ENCODE measurements at regions of chr19 and their contacts with region 1.

Region 1: DNA sequence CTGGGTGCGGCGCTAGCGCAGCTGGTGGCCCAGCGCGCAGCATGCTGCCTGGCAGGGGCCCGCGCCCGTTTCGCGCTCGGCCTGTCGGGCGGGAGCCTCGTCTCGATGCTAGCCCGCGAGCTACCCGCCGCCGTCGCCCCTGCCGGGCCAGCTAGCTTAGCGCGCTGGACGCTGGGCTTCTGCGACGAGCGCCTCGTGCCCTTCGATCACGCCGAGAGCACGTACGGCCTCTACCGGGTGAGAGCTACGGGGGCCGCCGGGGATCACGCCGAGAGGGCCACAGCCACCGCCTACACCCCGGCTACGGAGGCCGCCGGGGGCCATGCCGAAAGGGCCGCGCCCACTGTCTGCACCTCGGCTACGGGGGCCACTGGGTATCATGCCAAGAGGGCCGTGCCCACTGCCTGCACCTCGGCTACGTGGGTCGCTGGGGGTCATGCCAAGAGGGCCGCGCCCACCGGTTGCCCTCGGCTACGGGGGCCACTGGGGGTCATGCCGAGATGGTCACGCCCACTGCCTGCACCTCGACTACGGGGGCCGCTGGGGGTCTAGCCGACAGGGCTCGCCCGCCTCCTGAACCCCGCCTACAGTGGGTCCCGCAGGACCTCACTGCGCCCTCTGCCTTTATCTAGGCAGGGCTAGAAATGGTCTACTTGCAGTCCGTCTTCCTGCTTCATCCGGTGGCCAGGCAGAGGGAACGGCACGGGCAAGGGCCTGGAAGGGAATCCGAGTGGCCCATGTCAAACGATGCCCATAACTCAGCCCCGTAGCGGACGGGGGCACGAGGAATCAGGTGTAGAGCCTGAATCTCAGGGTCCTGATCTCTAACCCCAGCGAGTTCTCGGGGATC is 500 bp downstream of the PGLS start:
- DNase-seq: peak; percentile 76
- ATAC-seq: peak; percentile 46
- H3K4me3 ChIP-seq: peak overlapping the region; percentile 87 to 99
- H3K27ac ChIP-seq: peak overlapping the region; percentile 100
- H3K4me1 ChIP-seq: peaks cover 47 to 70% of the 10 kb centered on the region in 2 experiments
- H3K27me3 ChIP-seq: no peaks in the 10 kb centered on the region
- CTCF ChIP-seq: 0 out of 6 replicates have a peak, but pooled peaks of 2 of the 3 experiments have one; percentile 14 to 15
- POLR2A ChIP-seq: no peak
- RAD21 ChIP-seq: no peak

Region 2: GRCh38 chr19:17555480-17555928 is 43.6 kb after region 1 on chr19 and contains the start of gene COLGALT1:
- CTCF ChIA-PET with region 1: no interaction called
- POLR2A ChIA-PET with region 1: interaction called, 3 read pairs
- RAD21 ChIA-PET with region 1: interaction called in 1 of 2 experiments, 3 read pairs
- intact Hi-C with region 1: loop called (anchors 1 kb)
- DNase-seq: peak; percentile 96
- ATAC-seq: peak; percentile 92
- H3K4me3 ChIP-seq: peak within 1 kb of the TSS; percentile 77 to 100
- H3K27ac ChIP-seq: peak within 1 kb of the TSS; percentile 96
- H3K4me1 ChIP-seq: peaks cover 9 to 22% of the 10 kb centered on the region in 2 experiments; a peak in 3 of 4 replicates
- H3K27me3 ChIP-seq: no peaks in the 10 kb centered on the region
- CTCF ChIP-seq: no peak
- POLR2A ChIP-seq: peak; percentile 50
- RAD21 ChIP-seq: no peak
- total RNA-seq, gene COLGALT1: 86.0 TPM

Region 3: DNA sequence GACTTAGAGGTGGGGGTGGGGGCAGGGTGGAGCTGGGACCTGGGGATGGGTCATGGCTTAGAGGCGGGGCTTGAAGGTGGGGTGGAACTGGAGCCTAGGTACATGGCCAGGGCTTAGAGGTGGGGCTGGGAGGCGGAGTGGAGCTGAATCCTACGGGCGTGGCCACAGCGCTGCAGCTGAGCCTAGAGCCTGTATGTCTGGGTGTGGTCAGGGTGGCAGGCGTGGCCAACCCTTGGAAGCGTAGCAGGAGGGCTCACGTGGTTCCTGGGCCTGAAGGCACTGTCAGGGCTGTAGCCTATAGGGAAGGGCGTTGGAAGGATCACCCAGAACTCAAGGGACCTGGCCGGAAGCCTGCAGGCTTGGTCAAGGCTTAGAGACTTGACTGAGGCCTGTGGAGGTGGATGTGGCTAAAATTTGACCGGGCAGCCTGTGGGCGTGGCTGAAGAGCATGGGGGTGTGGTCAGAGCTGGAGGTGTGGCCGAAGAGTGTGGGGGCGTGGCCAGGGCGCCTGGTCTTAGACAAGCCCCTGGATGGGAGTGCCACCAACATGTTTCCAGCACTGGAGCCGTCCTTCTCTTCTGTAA is 67.8 kb after region 1 on chr19:
- CTCF ChIA-PET with region 1: no interaction called
- POLR2A ChIA-PET with region 1: no interaction called
- RAD21 ChIA-PET with region 1: interaction called in 1 of 2 experiments, 4 read pairs
- intact Hi-C with region 1: loop called (anchors 5 kb)
- DNase-seq: peak; percentile 90
- ATAC-seq: peak; percentile 81
- H3K4me3 ChIP-seq: no peak overlapping the region
- H3K27ac ChIP-seq: peak overlapping the region; percentile 50
- H3K4me1 ChIP-seq: peaks cover 16 to 36% of the 10 kb centered on the region in 2 experiments; a peak in 3 of 4 replicates
- H3K27me3 ChIP-seq: no peaks in the 10 kb centered on the region
- CTCF ChIP-seq: no peak
- POLR2A ChIP-seq: no peak
- RAD21 ChIP-seq: no peak

Measured in HCT116 (cell line).